HepG2 (cell line): ENCODE measurements at regions of chr2 and their contacts with region 1.

Region 1: DNA sequence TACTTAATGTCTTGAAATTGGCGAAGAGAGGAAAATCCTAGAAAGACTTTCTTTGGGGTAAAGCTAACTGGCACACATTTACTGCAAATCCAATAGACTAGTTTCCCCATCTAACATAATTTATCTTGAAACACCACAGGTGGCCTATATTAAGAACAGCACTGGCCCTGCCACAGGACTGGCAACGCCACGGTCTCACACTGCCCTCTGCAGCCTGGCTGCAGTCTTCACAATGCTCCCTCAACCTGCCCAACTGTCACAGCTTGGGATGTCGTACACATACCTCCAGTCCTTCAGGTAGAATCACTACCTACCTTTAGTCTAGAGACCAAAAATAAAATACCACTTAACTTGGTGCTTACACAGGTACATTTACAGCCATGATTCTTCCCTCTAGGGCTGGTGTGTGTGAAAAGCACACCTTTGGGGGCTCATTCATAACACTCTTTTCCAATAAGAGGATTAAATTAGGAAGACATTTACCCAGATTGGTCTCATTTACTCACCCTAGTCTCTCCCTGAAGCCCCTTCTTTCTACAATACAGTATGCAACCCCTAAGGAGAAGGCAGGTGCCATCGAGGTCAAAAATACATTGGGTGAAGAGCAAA is 222.2 kb downstream of the C1D start:
- DNase-seq: peak; percentile 43
- ATAC-seq: peak; percentile 100
- H3K4me3 ChIP-seq: no peak overlapping the region
- H3K27ac ChIP-seq: no peak overlapping the region
- H3K4me1 ChIP-seq: no peaks in the 10 kb centered on the region
- H3K27me3 ChIP-seq: no peaks in the 10 kb centered on the region
- CTCF ChIP-seq: peak; percentile 92
- EP300 ChIP-seq: no peak
- POLR2A ChIP-seq: no peak
- RAD21 ChIP-seq: peak; percentile 80

Region 2: DNA sequence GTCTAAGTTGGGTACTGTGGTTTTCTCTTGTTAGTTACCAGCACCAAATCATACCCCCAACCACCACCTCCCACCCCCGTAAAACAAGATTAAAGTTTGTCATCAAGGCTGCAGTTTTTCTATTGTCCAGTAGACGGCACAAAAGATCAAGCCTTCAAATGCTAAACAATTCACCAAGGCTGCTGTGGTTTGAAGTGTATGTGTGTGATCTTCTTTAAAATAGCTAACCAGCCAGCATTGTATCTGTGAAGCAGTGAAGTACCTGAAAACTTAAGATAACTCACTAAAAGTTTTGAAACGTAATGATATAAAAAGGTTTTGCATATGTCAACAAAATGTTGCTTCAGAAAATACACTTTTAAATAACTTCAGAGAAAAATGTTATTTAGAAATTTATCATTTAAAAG is 1411.5 kb before region 1 on chr2:
- CTCF ChIA-PET with region 1: no interaction called
- POLR2A ChIA-PET with region 1: no interaction called
- in situ Hi-C with region 1: loop called (anchors 10 kb)
- intact Hi-C with region 1: loop called (anchors 1 kb)
- DNase-seq: peak; percentile 61
- ATAC-seq: no peak
- H3K4me3 ChIP-seq: no peak overlapping the region
- H3K27ac ChIP-seq: no peak overlapping the region
- H3K4me1 ChIP-seq: peaks cover 22% of the 10 kb centered on the region
- H3K27me3 ChIP-seq: peaks cover 5 to 36% of the 10 kb centered on the region in 2 experiments
- CTCF ChIP-seq: peak; percentile 87
- EP300 ChIP-seq: no peak
- POLR2A ChIP-seq: no peak
- RAD21 ChIP-seq: peak; percentile 59; the same call in 1 of the 2 replicates

Region 3: GRCh38 chr2:66574701-66575624 is 1265.6 kb before region 1 on chr2:
- CTCF ChIA-PET with region 1: no interaction called
- POLR2A ChIA-PET with region 1: no interaction called
- in situ Hi-C with region 1: loop called (anchors 25 kb)
- intact Hi-C with region 1: no loop called
- DNase-seq: peak; percentile 57
- ATAC-seq: peak; percentile 61
- H3K4me3 ChIP-seq: peak overlapping the region; percentile 53 to 70 (median 62)
- H3K27ac ChIP-seq: no peak overlapping the region
- H3K4me1 ChIP-seq: peaks cover 36% of the 10 kb centered on the region
- H3K27me3 ChIP-seq: peaks cover 20 to 45% of the 10 kb centered on the region in 2 experiments
- CTCF ChIP-seq: peak; percentile 86
- EP300 ChIP-seq: no peak
- POLR2A ChIP-seq: no peak
- RAD21 ChIP-seq: peak; percentile 59

Region 4: GRCh38 chr2:67215214-67216055 is 625.1 kb before region 1 on chr2:
- CTCF ChIA-PET with region 1: no interaction called
- POLR2A ChIA-PET with region 1: no interaction called
- in situ Hi-C with region 1: no loop called
- intact Hi-C with region 1: loop called (anchors 10 kb)
- DNase-seq: peak; percentile 35
- ATAC-seq: peak; percentile 99
- H3K4me3 ChIP-seq: no peak overlapping the region
- H3K27ac ChIP-seq: no peak overlapping the region
- H3K4me1 ChIP-seq: no peaks in the 10 kb centered on the region
- H3K27me3 ChIP-seq: no peaks in the 10 kb centered on the region
- CTCF ChIP-seq: peak; percentile 85
- EP300 ChIP-seq: no peak
- POLR2A ChIP-seq: no peak
- RAD21 ChIP-seq: peak; percentile 89

Region 5: GRCh38 chr2:67733517-67733916 is 107.0 kb before region 1 on chr2:
- CTCF ChIA-PET with region 1: no interaction called
- POLR2A ChIA-PET with region 1: no interaction called
- in situ Hi-C with region 1: no loop called
- intact Hi-C with region 1: loop called (anchors 1 kb)
- DNase-seq: peak; percentile 8
- ATAC-seq: peak; percentile 87
- H3K4me3 ChIP-seq: no peak overlapping the region
- H3K27ac ChIP-seq: no peak overlapping the region
- H3K4me1 ChIP-seq: peaks cover 28% of the 10 kb centered on the region
- H3K27me3 ChIP-seq: no peaks in the 10 kb centered on the region
- CTCF ChIP-seq: peak; percentile 43
- EP300 ChIP-seq: no peak
- POLR2A ChIP-seq: no peak
- RAD21 ChIP-seq: no peak